ENCODE measurements at regions of chr6 and their contacts with region 1.

Region 1: GRCh38 chr6:24845578-24845977 is 46.9 kb upstream of the ARMH2 start:
- DNase-seq: no peak
- H3K4me3 ChIP-seq: no peak overlapping the region
- H3K27ac ChIP-seq: no peak overlapping the region
- H3K4me1 ChIP-seq: no peaks in the 10 kb centered on the region
- H3K27me3 ChIP-seq: no peaks in the 10 kb centered on the region
- CTCF ChIP-seq: no peak

Region 2: DNA sequence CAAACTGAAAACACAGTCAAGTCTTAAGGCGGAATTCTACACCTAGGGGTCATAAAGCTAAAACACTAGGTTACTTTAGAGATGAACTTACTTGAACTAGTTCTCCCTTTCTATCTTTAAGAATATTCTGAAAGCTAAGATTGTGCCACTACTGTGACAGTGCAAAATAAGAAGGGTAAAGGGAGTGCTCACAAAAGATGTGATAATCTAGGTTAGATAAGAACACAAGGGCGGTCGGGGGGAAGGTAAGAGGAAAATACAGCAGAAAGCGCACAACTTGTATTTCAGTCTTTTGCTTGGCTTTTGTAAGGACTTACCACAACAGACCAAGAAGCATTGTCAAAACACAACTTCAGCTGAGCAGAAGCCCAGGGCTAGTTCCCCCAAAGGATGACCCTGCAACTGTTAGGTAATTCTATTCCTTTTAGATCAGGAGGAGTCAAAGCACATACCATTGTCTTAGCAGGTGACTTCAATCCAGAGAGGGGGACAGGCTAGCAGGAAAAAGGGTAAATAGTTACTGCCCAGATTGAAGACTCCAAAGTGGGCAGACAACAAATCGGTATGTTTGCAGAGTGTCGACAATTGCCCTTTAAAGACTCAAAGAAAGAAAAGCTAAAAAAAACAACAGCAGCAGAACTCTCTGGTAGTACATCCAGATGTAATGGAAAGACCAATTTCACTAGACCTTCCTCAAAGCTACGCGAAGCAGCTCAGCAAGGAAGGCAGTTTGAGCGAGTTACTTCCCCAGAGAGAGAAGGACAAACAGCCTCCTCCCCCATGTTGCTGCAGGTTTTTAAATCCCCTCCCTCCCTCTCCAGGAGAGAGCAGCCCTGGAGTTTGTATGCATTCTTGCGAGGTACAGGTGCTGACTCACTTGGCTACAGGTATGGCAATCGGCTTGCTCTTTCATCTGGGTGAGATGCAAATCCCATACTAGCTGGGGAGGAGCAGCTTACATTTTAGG is 31.2 kb after region 1 on chr6:
- CTCF ChIA-PET with region 1: no interaction called
- POLR2A ChIA-PET with region 1: no interaction called
- intact Hi-C with region 1: no loop called
- DNase-seq: no peak
- H3K4me3 ChIP-seq: no peak overlapping the region
- H3K27ac ChIP-seq: no peak overlapping the region
- H3K4me1 ChIP-seq: peaks cover under 1% of the 10 kb centered on the region
- H3K27me3 ChIP-seq: no peaks in the 10 kb centered on the region
- CTCF ChIP-seq: no peak

Region 3: GRCh38 chr6:25793970-25794369 is 948.4 kb after region 1 on chr6:
- CTCF ChIA-PET with region 1: interaction called, 10 read pairs
- POLR2A ChIA-PET with region 1: no interaction called
- intact Hi-C with region 1: no loop called
- DNase-seq: no peak
- H3K4me3 ChIP-seq: no peak overlapping the region
- H3K27ac ChIP-seq: no peak overlapping the region
- H3K4me1 ChIP-seq: no peaks in the 10 kb centered on the region
- H3K27me3 ChIP-seq: no peaks in the 10 kb centered on the region
- CTCF ChIP-seq: no peak

Measured in PC-9 (cell line).